Activated CD4-positive, alpha-beta memory T cell treated with anti-CD3 and anti-CD28 coated beads for 36 hours (primary cell): ENCODE measurements at regions of chr3 and their contacts with region 1.

Region 1: GRCh38 chr3:120348981-120349818 is at the start of gene LRRC58:
- DNase-seq: peak; percentile 91
- H3K4me3 Mint-ChIP-seq: peak within 1 kb of the TSS; percentile 84
- H3K27ac Mint-ChIP-seq: peak within 1 kb of the TSS; percentile 85
- H3K4me1 Mint-ChIP-seq: peaks cover 44% of the 10 kb centered on the region
- H3K27me3 Mint-ChIP-seq: no peaks in the 10 kb centered on the region
- total RNA-seq, gene LRRC58: 16.2 to 16.9 TPM

Region 2: DNA sequence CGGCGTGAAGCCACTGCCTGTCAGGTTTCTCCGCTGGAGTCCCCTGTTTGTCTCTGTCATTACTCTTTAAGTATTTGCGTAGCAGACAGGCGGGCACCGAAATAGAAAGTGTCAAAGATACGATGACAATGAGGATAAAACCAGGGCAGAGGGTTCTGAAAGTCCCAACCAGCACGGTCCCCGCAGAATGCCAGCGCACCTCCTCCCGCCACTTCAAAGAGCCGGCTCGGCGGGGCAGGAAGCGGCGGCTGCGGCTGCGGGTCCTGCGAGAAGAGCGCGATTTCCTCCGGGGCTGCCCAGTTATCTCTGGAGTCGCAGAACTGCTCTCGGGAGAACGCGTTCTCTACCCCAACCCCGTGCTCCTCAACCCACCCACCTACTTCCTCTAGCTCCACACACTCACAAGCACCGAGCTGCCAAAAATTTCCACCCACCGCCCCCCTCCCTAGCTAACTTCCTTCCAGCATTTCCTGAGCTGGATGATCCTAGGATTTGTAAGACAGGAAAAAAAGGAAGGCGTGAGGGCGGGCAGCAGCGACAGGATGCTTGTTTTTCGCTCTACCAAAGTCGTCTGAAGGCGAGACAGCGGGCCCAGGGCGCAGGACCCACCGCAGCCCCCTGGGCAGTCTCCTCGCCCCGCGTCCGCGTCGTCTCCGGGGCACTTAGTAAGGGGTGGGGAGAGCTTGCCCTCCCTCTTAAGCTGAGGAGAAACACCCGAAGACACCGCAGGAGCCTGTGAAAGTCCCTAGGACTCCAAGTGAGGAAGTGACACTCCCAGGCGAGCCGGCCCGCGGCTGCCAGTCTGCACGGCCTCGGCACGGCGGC is 1055.1 kb before region 1 on chr3 and contains the start of gene ARHGAP31:
- CTCF ChIA-PET with region 1: no interaction called
- POLR2A ChIA-PET with region 1: interaction called, 3 read pairs
- intact Hi-C with region 1: loop called (anchors 10 kb)
- DNase-seq: peak; percentile 95
- H3K4me3 Mint-ChIP-seq: peak within 1 kb of the TSS; percentile 83
- H3K27ac Mint-ChIP-seq: peak within 1 kb of the TSS; percentile 93
- H3K4me1 Mint-ChIP-seq: peaks cover 44% of the 10 kb centered on the region
- H3K27me3 Mint-ChIP-seq: no peaks in the 10 kb centered on the region
- total RNA-seq, gene ARHGAP31: 10.8 to 11.4 TPM

Region 3: DNA sequence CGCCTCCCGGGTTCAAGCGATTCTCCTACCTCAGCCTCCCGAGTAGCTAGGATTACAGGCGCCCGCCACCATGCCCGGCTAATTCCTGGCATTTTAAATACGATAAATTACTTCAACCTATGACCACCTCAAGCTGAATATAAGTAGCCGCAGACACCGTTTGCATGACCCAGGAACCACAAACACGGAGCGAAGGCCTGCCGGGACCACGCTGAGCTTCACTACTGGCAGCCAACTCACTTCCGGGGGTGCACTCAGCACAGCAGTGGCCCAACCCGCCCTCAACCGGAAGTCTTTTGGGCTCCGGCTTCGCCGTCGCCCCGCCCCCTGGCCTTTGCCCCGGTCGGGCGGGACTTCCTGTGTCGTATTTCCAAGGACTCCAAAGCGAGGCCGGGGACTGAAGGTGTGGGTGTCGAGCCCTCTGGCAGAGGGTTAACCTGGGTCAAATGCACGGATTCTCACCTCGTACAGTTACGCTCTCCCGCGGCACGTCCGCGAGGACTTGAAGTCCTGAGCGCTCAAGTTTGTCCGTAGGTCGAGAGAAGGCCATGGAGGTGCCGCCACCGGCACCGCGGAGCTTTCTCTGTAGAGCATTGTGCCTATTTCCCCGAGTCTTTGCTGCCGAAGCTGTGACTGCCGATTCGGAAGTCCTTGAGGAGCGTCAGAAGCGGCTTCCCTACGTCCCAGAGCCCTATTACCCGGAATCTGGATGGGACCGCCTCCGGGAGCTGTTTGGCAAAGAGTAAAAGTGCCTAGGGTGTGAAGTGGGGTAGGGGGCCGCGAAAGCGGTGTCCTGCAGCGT is 850.8 kb before region 1 on chr3 and contains the start of gene TIMMDC1:
- CTCF ChIA-PET with region 1: no interaction called
- POLR2A ChIA-PET with region 1: no interaction called
- intact Hi-C with region 1: loop called (anchors 2 kb)
- DNase-seq: peak; percentile 98
- H3K4me3 Mint-ChIP-seq: peak within 1 kb of the TSS; percentile 98
- H3K27ac Mint-ChIP-seq: peak within 1 kb of the TSS; percentile 96
- H3K4me1 Mint-ChIP-seq: peaks cover 29% of the 10 kb centered on the region
- H3K27me3 Mint-ChIP-seq: no peaks in the 10 kb centered on the region
- total RNA-seq, gene TIMMDC1: 93.7 to 105 TPM

Region 4: DNA sequence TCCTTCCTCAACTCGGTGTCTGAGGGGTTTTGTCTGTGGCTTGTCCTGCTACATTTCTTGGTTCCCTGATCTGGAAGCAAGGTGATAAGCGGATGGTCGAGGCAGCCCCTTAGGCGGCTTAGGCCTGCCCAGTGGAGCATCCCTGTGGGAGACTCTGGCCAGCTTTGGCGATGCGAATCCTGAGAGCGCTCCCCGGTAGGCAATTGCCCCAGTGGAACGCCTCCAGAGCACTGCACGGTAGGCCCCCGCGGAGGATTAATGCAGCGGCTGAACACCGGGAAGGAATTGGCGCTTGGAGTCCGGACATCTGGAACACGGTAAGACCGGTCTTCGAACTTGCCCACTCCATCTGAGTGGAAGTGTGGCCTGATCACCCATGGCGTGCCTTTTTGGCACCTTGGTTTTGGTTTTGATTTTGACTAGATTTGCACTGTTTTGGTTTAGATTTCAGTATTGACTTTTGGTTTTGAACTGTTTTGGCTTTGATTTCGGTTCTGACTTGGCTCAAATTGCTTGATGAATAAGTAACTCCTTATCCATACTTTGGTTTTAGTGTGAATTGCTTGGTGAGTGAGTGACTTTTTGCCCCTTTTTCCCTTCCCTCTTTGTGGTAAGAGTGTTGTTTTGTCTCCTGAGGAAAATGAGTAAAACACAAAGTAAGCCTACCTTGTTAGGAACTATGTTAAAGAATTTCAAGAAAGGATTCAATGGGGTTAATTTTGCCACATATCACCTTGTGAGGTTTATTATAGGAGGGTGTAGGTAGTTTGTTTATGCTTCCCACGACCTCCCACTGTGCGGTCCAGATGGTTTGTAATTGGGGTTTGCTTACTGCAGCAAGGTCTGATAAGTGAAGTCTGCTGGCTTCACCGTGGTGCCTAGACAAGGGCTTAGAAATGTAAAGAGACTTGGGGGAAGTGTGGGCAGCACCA is 37.1 kb before region 1 on chr3:
- CTCF ChIA-PET with region 1: no interaction called
- POLR2A ChIA-PET with region 1: no interaction called
- intact Hi-C with region 1: loop called (anchors 2 kb)
- DNase-seq: no peak
- H3K4me3 Mint-ChIP-seq: no peak overlapping the region
- H3K27ac Mint-ChIP-seq: no peak overlapping the region
- H3K4me1 Mint-ChIP-seq: peaks cover 7% of the 10 kb centered on the region
- H3K27me3 Mint-ChIP-seq: no peaks in the 10 kb centered on the region

Region 5: GRCh38 chr3:120524171-120524923 is 175.1 kb after region 1 on chr3:
- CTCF ChIA-PET with region 1: no interaction called
- POLR2A ChIA-PET with region 1: no interaction called
- intact Hi-C with region 1: loop called (anchors 1 kb)
- DNase-seq: no peak
- H3K4me3 Mint-ChIP-seq: no peak overlapping the region
- H3K27ac Mint-ChIP-seq: peak overlapping the region; percentile 40
- H3K4me1 Mint-ChIP-seq: peaks cover 15% of the 10 kb centered on the region
- H3K27me3 Mint-ChIP-seq: peaks cover 6% of the 10 kb centered on the region

Region 6: GRCh38 chr3:120742198-120742849 is 393.1 kb after region 1 on chr3 and contains the starts of genes GTF2E1 and RABL3:
- CTCF ChIA-PET with region 1: no interaction called
- POLR2A ChIA-PET with region 1: no interaction called
- intact Hi-C with region 1: loop called (anchors 2 kb)
- DNase-seq: peak; percentile 98
- H3K4me3 Mint-ChIP-seq: peak within 1 kb of the TSS; percentile 96
- H3K27ac Mint-ChIP-seq: peak within 1 kb of the TSS; percentile 94
- H3K4me1 Mint-ChIP-seq: peaks cover 28% of the 10 kb centered on the region
- H3K27me3 Mint-ChIP-seq: peaks cover 2% of the 10 kb centered on the region
- total RNA-seq, gene GTF2E1: 18.4 to 19.8 TPM
- total RNA-seq, gene RABL3: 28.7 to 30.0 TPM